Naive thymus-derived CD4-positive, alpha-beta T cell (primary cell): ENCODE measurements at regions of chr1 and their contacts with region 1.

Region 1: GRCh38 chr1:193841857-193842256 is 655.4 kb upstream of the B3GALT2 start:
- DNase-seq: no peak
- ATAC-seq: no peak
- H3K4me3 ChIP-seq: no peak overlapping the region
- H3K4me3 Mint-ChIP-seq: no peak overlapping the region
- H3K27ac ChIP-seq: no peak overlapping the region
- H3K27ac Mint-ChIP-seq: no peak overlapping the region
- H3K4me1 ChIP-seq: no peaks in the 10 kb centered on the region
- H3K4me1 Mint-ChIP-seq: peaks cover 0 to 4% (median 0%) of the 10 kb centered on the region in 7 donors
- H3K27me3 ChIP-seq: no peaks in the 10 kb centered on the region
- H3K27me3 Mint-ChIP-seq: peaks cover 0 to 2% (median 0%) of the 10 kb centered on the region in 5 donors

Region 2: GRCh38 chr1:193856261-193856660 is 14.4 kb after region 1 on chr1:
- CTCF ChIA-PET with region 1: no interaction called
- POLR2A ChIA-PET with region 1: no interaction called
- intact Hi-C with region 1: loop called in 1 of 2 experiments (anchors 2 kb)
- DNase-seq: no peak
- ATAC-seq: no peak
- H3K4me3 ChIP-seq: no peak overlapping the region
- H3K4me3 Mint-ChIP-seq: no peak overlapping the region
- H3K27ac ChIP-seq: no peak overlapping the region
- H3K27ac Mint-ChIP-seq: no peak overlapping the region
- H3K4me1 ChIP-seq: no peaks in the 10 kb centered on the region
- H3K4me1 Mint-ChIP-seq: no peaks in the 10 kb centered on the region
- H3K27me3 ChIP-seq: no peaks in the 10 kb centered on the region
- H3K27me3 Mint-ChIP-seq: no peaks in the 10 kb centered on the region

Region 3: GRCh38 chr1:193971595-193971994 is 129.7 kb after region 1 on chr1:
- CTCF ChIA-PET with region 1: no interaction called
- POLR2A ChIA-PET with region 1: no interaction called
- intact Hi-C with region 1: loop called in 1 of 2 experiments (anchors 5 kb)
- DNase-seq: no peak
- ATAC-seq: no peak
- H3K4me3 ChIP-seq: no peak overlapping the region
- H3K4me3 Mint-ChIP-seq: no peak overlapping the region
- H3K27ac ChIP-seq: no peak overlapping the region
- H3K27ac Mint-ChIP-seq: no peak overlapping the region
- H3K4me1 ChIP-seq: no peaks in the 10 kb centered on the region
- H3K4me1 Mint-ChIP-seq: peaks cover 0 to 9% (median 0%) of the 10 kb centered on the region in 7 donors
- H3K27me3 ChIP-seq: no peaks in the 10 kb centered on the region
- H3K27me3 Mint-ChIP-seq: no peaks in the 10 kb centered on the region